A549 (cell line): ENCODE measurements at regions of chr9 and their contacts with region 1.

Region 1: GRCh38 chr9:112379177-112380101 is 469 bp upstream of the HSDL2 start:
- DNase-seq: peak; percentile 92 to 99
- ATAC-seq: peak; percentile 91 to 95
- H3K4me3 ChIP-seq: peak overlapping the region; percentile 70
- H3K27ac ChIP-seq: peak overlapping the region; percentile 90 to 93
- H3K4me1 ChIP-seq: peaks cover 28% of the 10 kb centered on the region; the same call in 2 of the 3 replicates
- CTCF ChIP-seq: no peak
- EP300 ChIP-seq: no peak
- POLR2A ChIP-seq: peak; percentile 93
- RAD21 ChIP-seq: no peak

Region 2: DNA sequence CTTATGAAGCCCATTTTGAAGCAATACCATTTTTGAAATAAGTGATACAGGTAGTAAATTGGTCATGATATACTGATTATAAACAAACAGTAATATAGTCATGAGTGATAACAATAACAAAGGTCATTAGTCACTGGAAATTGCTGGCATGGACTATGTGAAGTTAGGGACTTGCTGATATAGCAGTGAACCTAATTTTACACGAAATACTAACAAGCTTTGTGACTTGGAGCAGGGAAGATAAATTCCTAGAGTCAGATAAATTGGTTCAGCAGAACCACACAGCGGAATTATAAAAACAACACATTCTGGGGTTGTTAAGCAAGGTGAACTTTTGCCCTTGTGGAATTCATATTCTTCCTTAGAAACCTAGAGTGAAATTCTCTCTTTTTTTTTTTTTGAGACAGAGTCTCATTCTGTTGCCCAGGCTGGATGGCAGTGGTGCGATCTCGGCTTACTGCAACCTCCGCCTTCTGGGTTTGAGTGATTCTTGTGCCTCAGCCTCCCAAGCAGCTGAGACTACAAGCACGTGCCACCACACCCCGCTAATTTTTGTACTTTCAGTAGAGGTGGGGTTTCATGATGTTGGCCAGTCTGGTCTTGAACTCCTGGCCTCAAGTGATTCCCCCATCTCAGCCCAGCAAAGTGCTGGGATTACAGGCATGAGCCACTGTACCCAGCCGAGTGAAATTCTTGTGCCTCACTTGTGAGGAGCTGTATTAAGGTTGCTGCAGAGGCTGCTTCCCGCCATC is 476.9 kb before region 1 on chr9:
- CTCF ChIA-PET with region 1: no interaction called
- POLR2A ChIA-PET with region 1: no interaction called
- DNase-seq: no peak
- ATAC-seq: no peak
- H3K4me3 ChIP-seq: no peak overlapping the region
- H3K27ac ChIP-seq: no peak overlapping the region
- H3K4me1 ChIP-seq: peaks cover 47% of the 10 kb centered on the region
- CTCF ChIP-seq: no peak
- EP300 ChIP-seq: no peak
- POLR2A ChIP-seq: no peak
- RAD21 ChIP-seq: no peak

Region 3: GRCh38 chr9:112396416-112396815 is 17.0 kb after region 1 on chr9:
- CTCF ChIA-PET with region 1: no interaction called
- POLR2A ChIA-PET with region 1: interaction called, 10 read pairs
- DNase-seq: no peak
- ATAC-seq: no peak
- H3K4me3 ChIP-seq: no peak overlapping the region
- H3K27ac ChIP-seq: no peak overlapping the region
- H3K4me1 ChIP-seq: peaks cover 16% of the 10 kb centered on the region
- CTCF ChIP-seq: no peak
- EP300 ChIP-seq: no peak
- POLR2A ChIP-seq: no peak
- RAD21 ChIP-seq: no peak

Region 4: GRCh38 chr9:112408275-112408674 is 28.8 kb after region 1 on chr9:
- CTCF ChIA-PET with region 1: no interaction called
- POLR2A ChIA-PET with region 1: no interaction called
- DNase-seq: no peak
- ATAC-seq: no peak
- H3K4me3 ChIP-seq: no peak overlapping the region
- H3K27ac ChIP-seq: no peak overlapping the region
- H3K4me1 ChIP-seq: peaks cover 10% of the 10 kb centered on the region; the same call in 1 of the 3 replicates
- CTCF ChIP-seq: no peak
- EP300 ChIP-seq: no peak
- POLR2A ChIP-seq: no peak
- RAD21 ChIP-seq: no peak

Region 5: GRCh38 chr9:112486221-112487007 is 107.0 kb after region 1 on chr9 and contains the start of gene KIAA1958:
- CTCF ChIA-PET with region 1: no interaction called
- POLR2A ChIA-PET with region 1: interaction called, 14 read pairs
- DNase-seq: peak; percentile 89 to 91
- ATAC-seq: peak; percentile 91 to 97
- H3K4me3 ChIP-seq: peak within 1 kb of the TSS; percentile 97
- H3K27ac ChIP-seq: peak within 1 kb of the TSS; percentile 87 to 89
- H3K4me1 ChIP-seq: peaks cover 18% of the 10 kb centered on the region
- CTCF ChIP-seq: no peak
- EP300 ChIP-seq: no peak
- POLR2A ChIP-seq: peak; percentile 99
- RAD21 ChIP-seq: no peak
- polyA plus RNA-seq, gene KIAA1958: 3.7 and 6.7 TPM in 2 replicates